ENCODE measurements at regions of chr18 and their contacts with region 1.

Region 1: GRCh38 chr18:13369756-13370510 is 151.4 kb downstream of the LDLRAD4 start:
- DNase-seq: no peak
- ATAC-seq: no peak
- H3K4me3 ChIP-seq: no peak overlapping the region
- H3K27ac ChIP-seq: no peak overlapping the region
- H3K4me1 ChIP-seq: no peaks in the 10 kb centered on the region
- H3K27me3 ChIP-seq: no peaks in the 10 kb centered on the region; the same call in 1 of the 2 replicates
- CTCF ChIP-seq: no peak

Region 2: DNA sequence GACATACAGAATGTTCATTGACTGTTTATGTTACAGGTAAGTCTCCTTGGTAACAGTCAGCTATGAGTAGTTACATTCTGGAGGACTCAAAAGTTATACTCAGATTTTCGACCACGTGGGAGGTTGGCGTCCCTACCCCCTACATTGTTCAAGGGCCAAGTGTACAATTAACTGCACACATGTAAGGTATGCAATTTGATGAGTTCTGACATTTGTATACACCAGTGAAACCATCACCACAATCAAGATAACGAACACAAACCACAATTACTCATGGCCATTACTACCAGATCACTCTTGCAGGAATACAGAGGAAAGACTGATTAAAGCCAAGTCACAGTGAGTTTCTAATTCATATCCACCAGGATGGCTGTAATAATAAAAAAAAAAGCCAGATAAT is 191.0 kb before region 1 on chr18:
- CTCF ChIA-PET with region 1: no interaction called
- POLR2A ChIA-PET with region 1: no interaction called
- in situ Hi-C with region 1: no loop called
- intact Hi-C with region 1: no loop called
- DNase-seq: no peak
- ATAC-seq: no peak
- H3K4me3 ChIP-seq: no peak overlapping the region
- H3K27ac ChIP-seq: no peak overlapping the region
- H3K4me1 ChIP-seq: no peaks in the 10 kb centered on the region; the same call in 1 of the 2 replicates
- H3K27me3 ChIP-seq: no peaks in the 10 kb centered on the region
- CTCF ChIP-seq: no peak

Region 3: GRCh38 chr18:13425462-13426133 is 55.7 kb after region 1 on chr18:
- CTCF ChIA-PET with region 1: no interaction called
- POLR2A ChIA-PET with region 1: no interaction called
- in situ Hi-C with region 1: no loop called
- intact Hi-C with region 1: loop called (anchors 10 kb)
- DNase-seq: no peak
- ATAC-seq: no peak
- H3K4me3 ChIP-seq: no peak overlapping the region
- H3K27ac ChIP-seq: no peak overlapping the region
- H3K4me1 ChIP-seq: no peaks in the 10 kb centered on the region
- H3K27me3 ChIP-seq: no peaks in the 10 kb centered on the region
- CTCF ChIP-seq: no peak

Measured in Panc1 (cell line).